ENCODE measurements at regions of chr20 and their contacts with region 1.

Region 1: DNA sequence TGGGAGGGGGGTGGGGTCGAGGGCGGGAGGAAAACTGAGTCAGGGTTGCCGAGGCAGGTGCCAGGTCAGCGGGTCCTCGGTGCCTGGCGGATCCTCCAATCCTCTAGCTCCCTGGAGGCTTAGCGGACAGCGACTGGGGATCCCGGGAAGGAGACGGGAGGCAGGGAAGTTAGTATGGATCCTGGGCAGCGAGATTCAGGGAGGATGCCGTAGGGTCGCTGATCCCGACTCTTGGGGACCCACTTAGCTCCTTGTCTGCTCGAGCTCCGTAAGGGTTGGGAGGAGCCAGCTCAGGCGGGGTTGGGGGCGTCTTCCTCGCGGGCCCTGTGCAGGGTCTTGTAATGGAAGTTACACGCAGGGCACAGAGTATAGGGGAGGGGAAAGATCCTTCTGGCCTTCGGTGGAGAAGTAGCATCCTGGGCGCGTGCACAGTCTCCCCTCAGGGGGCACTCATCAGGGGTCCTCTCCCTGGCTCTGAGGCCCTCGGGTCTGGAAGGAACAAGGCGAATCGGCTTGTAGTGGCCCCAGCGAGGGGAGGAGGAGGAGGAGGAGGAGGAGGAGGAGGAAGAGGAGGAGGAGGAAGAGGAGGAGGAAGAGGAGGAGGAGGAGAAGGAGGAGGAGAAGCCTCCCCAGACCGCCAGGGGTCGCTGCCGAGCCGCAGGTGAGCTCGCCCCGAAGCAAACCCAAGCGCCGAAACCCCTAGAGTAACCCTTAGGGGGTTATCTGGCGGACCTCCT is 6.4 kb upstream of the SLC12A5 start:
- DNase-seq: peak; percentile 70 to 73 (median 73)
- ATAC-seq: peak; percentile 51 to 73 (median 70)
- H3K4me3 ChIP-seq: no peak overlapping the region
- H3K27ac ChIP-seq: no peak overlapping the region
- H3K4me1 ChIP-seq: no peaks in the 10 kb centered on the region
- H3K27me3 ChIP-seq: peaks cover 0 to 7% of the 10 kb centered on the region in 2 donors
- CTCF ChIP-seq: peak; percentile 56 to 63 (median 60)
- POLR2A ChIP-seq: no peak

Region 2: GRCh38 chr20:45867819-45868176 is 154.8 kb before region 1 on chr20:
- intact Hi-C with region 1: no loop called
- DNase-seq: no peak
- ATAC-seq: no peak
- H3K4me3 ChIP-seq: no peak overlapping the region
- H3K27ac ChIP-seq: no peak overlapping the region
- H3K4me1 ChIP-seq: peaks cover 0 to 4% (median 0%) of the 10 kb centered on the region in 4 donors
- H3K27me3 ChIP-seq: no peaks in the 10 kb centered on the region
- CTCF ChIP-seq: no peak
- POLR2A ChIP-seq: no peak

Region 3: GRCh38 chr20:45924391-45925261 is 98.0 kb before region 1 on chr20:
- intact Hi-C with region 1: no loop called
- DNase-seq: no peak
- ATAC-seq: peak; percentile 73 to 80 (median 78)
- H3K4me3 ChIP-seq: peak overlapping the region in 2 of 3 donors; percentile 19 to 21
- H3K27ac ChIP-seq: peak overlapping the region; percentile 75 to 79 (median 78)
- H3K4me1 ChIP-seq: peaks cover 0 to 15% (median 7%) of the 10 kb centered on the region in 4 donors
- H3K27me3 ChIP-seq: no peaks in the 10 kb centered on the region
- CTCF ChIP-seq: no peak
- POLR2A ChIP-seq: no peak

Region 4: GRCh38 chr20:46070215-46070900 is 47.8 kb after region 1 on chr20:
- intact Hi-C with region 1: loop called in 1 of 2 experiments (anchors 10 kb)
- DNase-seq: no peak
- ATAC-seq: no peak
- H3K4me3 ChIP-seq: no peak overlapping the region
- H3K27ac ChIP-seq: no peak overlapping the region
- H3K4me1 ChIP-seq: no peaks in the 10 kb centered on the region
- H3K27me3 ChIP-seq: no peaks in the 10 kb centered on the region
- CTCF ChIP-seq: no peak
- POLR2A ChIP-seq: no peak

Region 5: DNA sequence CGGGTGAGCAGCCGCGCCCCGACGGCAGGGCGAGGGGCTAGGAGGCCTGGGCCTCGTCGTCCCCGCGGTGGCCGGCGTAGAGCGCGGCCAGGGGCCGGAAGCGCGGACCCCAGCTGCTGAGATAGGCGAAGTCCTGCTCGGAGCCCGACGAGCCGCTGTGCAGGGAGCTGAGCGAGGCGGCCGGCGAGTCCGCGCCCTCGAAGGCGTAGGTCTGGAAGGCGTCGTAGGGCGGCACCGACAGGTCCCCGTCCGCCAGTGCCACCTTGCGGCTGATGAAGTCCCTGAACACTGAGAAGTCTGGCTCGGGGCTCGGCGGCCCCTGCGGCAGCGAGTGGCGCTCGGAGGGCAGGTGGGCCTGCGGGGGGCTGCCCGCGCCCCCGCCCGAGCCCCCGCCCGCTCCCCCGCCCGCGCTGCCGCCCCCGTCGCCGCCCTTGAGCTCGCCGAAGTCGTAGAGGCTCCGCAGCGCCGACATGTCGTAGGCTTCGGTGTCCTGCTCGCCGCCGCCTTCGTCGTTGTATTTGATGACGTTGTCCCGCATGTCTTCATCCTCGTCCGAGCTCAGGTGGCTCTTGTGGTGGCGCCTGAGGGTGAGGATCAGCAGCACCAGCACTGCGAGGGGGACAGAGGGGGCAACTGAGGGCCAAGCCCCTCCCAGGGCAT is 152.0 kb after region 1 on chr20:
- intact Hi-C with region 1: loop called in 1 of 2 experiments (anchors 10 kb)
- DNase-seq: peak; percentile 64 to 75 (median 71)
- ATAC-seq: peak; percentile 75 to 85 (median 82)
- H3K4me3 ChIP-seq: no peak overlapping the region
- H3K27ac ChIP-seq: no peak overlapping the region
- H3K4me1 ChIP-seq: no peaks in the 10 kb centered on the region
- H3K27me3 ChIP-seq: peaks cover 0 to 12% of the 10 kb centered on the region in 2 donors
- CTCF ChIP-seq: peak; percentile 45 to 73 (median 58)
- POLR2A ChIP-seq: no peak

Measured in right lobe of liver (tissue), 6 donors.